ENCODE measurements at regions of chr5 and their contacts with region 1.

Region 1: DNA sequence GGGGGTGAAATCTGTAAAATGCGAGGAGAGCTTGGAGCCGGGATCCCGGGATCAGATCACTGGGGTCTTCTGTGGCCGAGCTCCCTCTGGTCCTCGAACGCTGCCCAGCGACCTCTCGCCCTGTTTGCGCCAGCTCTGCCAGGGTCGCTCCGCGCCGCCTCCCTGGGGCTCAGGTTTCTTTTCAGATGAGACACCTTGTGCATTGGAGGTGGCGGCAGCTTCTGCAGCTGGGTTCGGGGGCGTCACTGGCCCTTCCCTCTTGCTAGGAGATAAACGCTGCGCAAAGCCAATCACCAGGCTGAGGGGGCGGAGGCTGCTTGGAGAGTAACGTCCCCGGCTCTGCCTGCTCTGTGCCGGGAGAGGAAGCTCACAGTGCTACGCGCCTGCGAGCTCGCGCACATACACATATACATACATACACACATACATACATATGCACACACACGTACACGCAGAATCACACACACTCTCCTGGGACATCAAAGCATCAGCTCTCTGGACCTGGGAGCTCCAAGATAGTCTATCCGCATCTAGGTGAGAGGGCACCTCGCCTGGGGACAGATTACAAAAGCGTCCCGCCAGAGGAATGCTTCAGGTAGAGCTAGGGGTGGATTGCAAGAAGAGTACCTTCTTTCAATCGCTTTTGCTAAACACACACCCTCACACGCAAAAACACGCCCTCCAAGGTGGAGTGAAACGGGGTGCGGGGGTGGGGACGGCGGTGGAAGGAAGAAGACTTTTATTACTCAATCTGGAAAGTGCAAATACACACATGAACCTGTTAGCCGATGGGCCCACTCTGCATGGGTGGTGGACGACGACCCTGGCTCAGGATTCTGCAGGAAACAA is at the start of gene ST8SIA4:
- DNase-seq: peak; percentile 81 to 89
- ATAC-seq: peak; percentile 81 to 92 (median 90)
- H3K4me3 ChIP-seq: peak within 1 kb of the TSS; percentile 39 to 75 (median 61)
- H3K27ac ChIP-seq: peak within 1 kb of the TSS in 9 of 10 donors; percentile 34 to 96 (median 85)
- H3K4me1 ChIP-seq: peaks cover 0 to 31% (median 15%) of the 10 kb centered on the region in 9 donors
- H3K27me3 ChIP-seq: peaks cover 0 to 13% (median 0%) of the 10 kb centered on the region in 7 donors
- CTCF ChIP-seq: no peak
- total RNA-seq, gene ST8SIA4: 1.6 to 12.9 (median 5.1) TPM

Region 2: DNA sequence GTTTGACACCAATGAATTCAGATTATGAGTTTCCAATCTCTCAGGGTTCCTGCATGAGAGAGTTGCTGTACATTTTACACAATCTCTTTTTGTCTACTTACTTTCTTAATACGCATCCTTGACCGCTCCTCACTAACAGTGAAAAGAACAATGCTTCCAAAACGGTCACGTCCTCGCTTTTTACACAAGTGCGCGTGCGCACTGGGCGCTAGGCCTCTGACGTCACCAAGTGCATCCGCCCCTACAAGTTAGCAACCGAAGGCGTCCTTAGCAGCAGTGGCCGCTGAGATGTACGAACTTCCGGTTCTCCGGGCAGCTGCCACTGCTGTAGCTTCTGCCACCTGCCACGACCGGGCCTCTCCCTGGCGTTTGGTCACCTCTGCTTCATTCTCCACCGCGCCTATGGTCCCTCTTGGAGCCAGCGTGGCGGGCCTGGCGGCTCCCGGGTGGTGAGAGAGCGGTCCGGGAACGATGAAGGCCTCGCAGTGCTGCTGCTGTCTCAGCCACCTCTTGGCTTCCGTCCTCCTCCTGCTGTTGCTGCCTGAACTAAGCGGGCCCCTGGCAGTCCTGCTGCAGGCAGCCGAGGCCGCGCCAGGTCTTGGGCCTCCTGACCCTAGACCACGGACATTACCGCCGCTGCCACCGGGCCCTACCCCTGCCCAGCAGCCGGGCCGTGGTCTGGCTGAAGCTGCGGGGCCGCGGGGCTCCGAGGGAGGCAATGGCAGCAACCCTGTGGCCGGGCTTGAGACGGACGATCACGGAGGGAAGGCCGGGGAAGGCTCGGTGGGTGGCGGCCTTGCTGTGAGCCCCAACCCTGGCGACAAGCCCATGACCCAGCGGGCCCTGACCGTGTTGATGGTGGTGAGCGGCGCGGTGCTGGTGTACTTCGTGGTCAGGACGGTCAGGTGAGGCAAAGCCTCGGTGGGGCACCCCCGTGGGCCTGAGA is 367.9 kb before region 1 on chr5 and contains the start of gene FAM174A:
- intact Hi-C with region 1: loop called in 2 of 10 experiments (anchors 5 to 10 kb)
- DNase-seq: peak; percentile 96 to 97
- ATAC-seq: peak; percentile 96 to 99 (median 99)
- H3K4me3 ChIP-seq: peak within 1 kb of the TSS; percentile 63 to 90 (median 80)
- H3K27ac ChIP-seq: peak within 1 kb of the TSS; percentile 28 to 95 (median 90)
- H3K4me1 ChIP-seq: peaks cover 0 to 42% (median 26%) of the 10 kb centered on the region in 9 donors
- H3K27me3 ChIP-seq: no peaks in the 10 kb centered on the region
- CTCF ChIP-seq: no peak
- total RNA-seq, gene FAM174A: 16.0 to 24.0 (median 20.1) TPM

Region 3: GRCh38 chr5:100709771-100710170 is 193.5 kb before region 1 on chr5:
- intact Hi-C with region 1: loop called in 1 of 10 experiments (anchors 10 kb)
- DNase-seq: no peak
- ATAC-seq: peak in 4 of 8 donors; percentile 37 to 51 (median 46)
- H3K4me3 ChIP-seq: no peak overlapping the region
- H3K27ac ChIP-seq: peak overlapping the region in 1 of 10 donors; percentile 35
- H3K4me1 ChIP-seq: peaks cover 0 to 10% (median 0%) of the 10 kb centered on the region in 9 donors
- H3K27me3 ChIP-seq: no peaks in the 10 kb centered on the region
- CTCF ChIP-seq: no peak

Region 4: DNA sequence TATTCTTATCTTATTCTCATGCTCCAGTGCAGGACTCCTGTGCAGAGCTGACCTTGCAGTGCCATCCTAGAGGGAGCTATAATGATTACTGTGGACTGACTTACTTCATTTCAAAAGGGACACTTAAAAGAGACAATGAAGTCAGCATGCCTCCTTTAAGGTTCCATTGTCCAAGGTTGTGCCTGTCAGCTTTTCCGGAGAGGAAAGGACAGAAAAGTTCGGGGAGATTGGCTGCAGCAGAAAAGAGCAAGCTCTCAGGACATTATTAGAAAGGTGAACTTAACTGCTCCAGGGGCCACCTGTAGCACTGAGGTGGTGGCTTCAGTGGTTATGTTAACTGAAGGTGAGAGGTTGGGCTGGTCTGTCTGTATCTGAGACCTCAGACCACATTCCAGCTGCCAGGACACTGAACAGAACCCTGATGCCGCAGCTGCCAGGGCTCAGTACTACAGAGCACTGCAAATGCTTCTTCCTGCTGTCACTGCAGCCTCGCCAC is 113.0 kb before region 1 on chr5:
- intact Hi-C with region 1: loop called in 1 of 10 experiments (anchors 5 kb)
- DNase-seq: no peak
- ATAC-seq: peak in 5 of 8 donors; percentile 30 to 59 (median 52)
- H3K4me3 ChIP-seq: no peak overlapping the region
- H3K27ac ChIP-seq: no peak overlapping the region
- H3K4me1 ChIP-seq: peaks cover 0 to 12% (median 0%) of the 10 kb centered on the region in 9 donors
- H3K27me3 ChIP-seq: no peaks in the 10 kb centered on the region
- CTCF ChIP-seq: peak in 5 of 9 donors; percentile 18 to 45 (median 33)

Region 5: GRCh38 chr5:100840384-100840783 is 62.9 kb before region 1 on chr5:
- intact Hi-C with region 1: loop called in 2 of 10 experiments (anchors 5 to 10 kb)
- DNase-seq: no peak
- ATAC-seq: no peak
- H3K4me3 ChIP-seq: no peak overlapping the region
- H3K27ac ChIP-seq: peak overlapping the region in 4 of 10 donors; percentile 2 to 65 (median 54)
- H3K4me1 ChIP-seq: peaks cover 0 to 56% (median 14%) of the 10 kb centered on the region in 9 donors
- H3K27me3 ChIP-seq: no peaks in the 10 kb centered on the region
- CTCF ChIP-seq: no peak

Region 6: GRCh38 chr5:100877274-100877673 is 26.0 kb before region 1 on chr5:
- intact Hi-C with region 1: no loop called
- DNase-seq: no peak
- ATAC-seq: no peak
- H3K4me3 ChIP-seq: no peak overlapping the region
- H3K27ac ChIP-seq: peak overlapping the region in 1 of 10 donors; percentile 49
- H3K4me1 ChIP-seq: peaks cover 0 to 16% (median 0%) of the 10 kb centered on the region in 9 donors
- H3K27me3 ChIP-seq: no peaks in the 10 kb centered on the region
- CTCF ChIP-seq: no peak

Region 7: DNA sequence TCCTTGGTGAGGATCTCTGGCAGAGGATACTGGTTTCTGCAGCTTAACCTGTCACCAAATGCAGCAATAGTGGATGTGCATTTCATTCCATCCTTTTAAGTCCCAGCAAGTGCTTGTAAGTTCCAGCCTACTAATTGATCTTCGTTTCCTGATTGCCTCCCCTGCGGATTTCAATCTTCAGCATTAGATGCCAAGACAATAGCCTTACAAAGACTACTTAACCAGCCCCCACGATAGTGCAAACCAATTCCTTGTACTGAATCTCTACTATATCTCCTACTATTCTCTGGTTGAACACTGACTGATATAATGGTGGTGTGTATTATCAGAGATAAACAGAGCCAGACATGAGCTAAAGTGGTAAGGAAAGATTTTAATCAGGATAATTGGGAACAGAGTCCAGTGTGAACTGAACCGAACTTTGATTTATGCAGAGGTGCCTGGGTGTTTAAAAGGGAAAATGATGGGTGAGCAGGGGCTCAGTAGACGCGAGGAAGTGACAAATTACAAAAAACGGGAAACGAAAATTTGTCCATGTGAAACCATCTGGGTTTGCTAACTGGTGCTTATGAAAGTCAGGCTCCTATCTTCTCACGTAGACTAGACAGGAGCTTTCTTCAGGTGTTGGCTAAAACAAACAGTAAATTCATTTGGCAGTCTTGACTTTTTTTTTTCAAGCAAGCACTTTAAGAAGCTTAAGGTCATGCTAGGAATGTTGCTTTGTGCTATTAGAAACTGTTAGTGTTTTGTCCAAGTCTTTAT is 106.7 kb after region 1 on chr5:
- intact Hi-C with region 1: loop called in 1 of 10 experiments (anchors 10 kb)
- DNase-seq: no peak
- ATAC-seq: no peak
- H3K4me3 ChIP-seq: no peak overlapping the region
- H3K27ac ChIP-seq: no peak overlapping the region
- H3K4me1 ChIP-seq: no peaks in the 10 kb centered on the region
- H3K27me3 ChIP-seq: no peaks in the 10 kb centered on the region
- CTCF ChIP-seq: no peak

Region 8: DNA sequence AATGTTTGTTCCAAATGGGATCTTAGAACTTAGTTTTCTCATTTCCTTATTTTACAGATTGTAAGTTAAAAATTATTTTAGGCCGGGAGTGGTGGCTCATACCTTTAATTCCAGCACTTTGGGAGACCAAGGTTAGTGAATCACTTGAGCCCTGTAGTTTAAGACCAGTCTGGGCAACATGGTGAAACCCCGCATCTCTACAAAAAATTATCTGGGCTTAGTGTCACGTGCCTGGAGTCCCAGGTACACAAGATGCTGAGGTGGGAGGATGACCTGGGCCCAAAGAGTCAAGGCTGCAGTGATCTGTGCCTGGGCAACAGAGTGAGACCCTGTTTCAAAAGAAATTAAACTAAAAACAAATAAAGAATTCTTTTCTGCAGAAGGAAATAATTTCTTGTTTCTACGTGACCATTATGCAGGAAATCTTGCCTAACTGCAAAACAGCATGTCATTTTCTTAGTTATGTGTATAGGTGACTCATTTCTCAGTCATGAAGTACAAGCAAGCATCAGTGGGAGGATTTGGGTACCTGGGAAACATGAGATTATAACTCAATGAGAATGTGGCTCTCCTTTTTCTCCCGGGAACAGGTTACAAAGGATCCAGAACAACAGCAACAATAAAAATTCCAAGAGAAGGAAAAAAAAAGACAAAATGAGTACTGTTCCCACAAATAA is 374.9 kb after region 1 on chr5:
- intact Hi-C with region 1: no loop called
- DNase-seq: no peak
- ATAC-seq: no peak
- H3K4me3 ChIP-seq: no peak overlapping the region
- H3K27ac ChIP-seq: no peak overlapping the region
- H3K4me1 ChIP-seq: no peaks in the 10 kb centered on the region
- H3K27me3 ChIP-seq: no peaks in the 10 kb centered on the region
- CTCF ChIP-seq: no peak